Mammary epithelial cell (primary cell): ENCODE measurements at regions of chr3 and their contacts with region 1.

Region 1: DNA sequence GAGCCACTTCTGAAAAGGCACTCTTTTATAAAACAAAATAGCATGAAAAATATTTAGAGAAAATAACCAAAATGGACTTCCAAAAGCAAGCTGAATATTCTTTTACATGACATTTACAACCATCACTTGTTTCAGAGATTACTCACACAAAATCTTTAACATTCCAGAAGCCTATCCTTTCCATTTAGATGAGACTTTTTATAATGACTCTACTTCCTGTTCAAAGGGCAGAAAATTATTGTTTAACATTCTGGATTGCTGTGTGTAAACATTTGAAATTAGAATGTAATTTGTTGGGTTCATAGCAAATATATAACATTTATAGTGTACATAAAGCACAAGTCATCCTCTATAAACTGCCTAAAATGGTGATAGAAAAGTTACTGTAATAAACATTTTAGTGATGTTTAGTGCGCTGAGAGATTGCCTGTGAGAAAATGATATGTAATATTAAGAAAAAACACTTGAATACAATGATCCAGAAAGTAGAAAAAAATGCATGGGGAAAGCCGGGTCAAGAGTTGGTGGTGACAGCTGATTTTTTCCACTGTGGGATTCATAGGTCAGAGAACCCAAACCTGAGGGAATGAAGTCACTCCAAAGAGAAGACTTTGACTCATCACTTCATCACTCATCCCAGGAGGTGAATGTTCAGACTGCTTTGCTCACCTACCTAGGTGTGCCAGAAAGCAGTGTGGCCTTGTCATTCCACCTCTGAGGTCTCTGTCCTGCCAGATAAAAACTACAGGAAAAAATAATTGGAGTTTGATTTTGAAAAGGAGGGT is 305.8 kb downstream of the ARPP21 start:
- DNase-seq: peak; percentile 80
- H3K4me3 ChIP-seq: no peak overlapping the region
- H3K27ac ChIP-seq: no peak overlapping the region
- H3K4me1 ChIP-seq: peaks cover 11% of the 10 kb centered on the region
- H3K27me3 ChIP-seq: no peaks in the 10 kb centered on the region
- CTCF ChIP-seq: no peak

Region 2: GRCh38 chr3:35137612-35138011 is 807.5 kb before region 1 on chr3:
- CTCF ChIA-PET with region 1: no interaction called
- dilution Hi-C with region 1: no loop called
- in situ Hi-C with region 1: no loop called
- intact Hi-C with region 1: no loop called
- DNase-seq: no peak
- H3K4me3 ChIP-seq: no peak overlapping the region
- H3K27ac ChIP-seq: no peak overlapping the region
- H3K4me1 ChIP-seq: no peaks in the 10 kb centered on the region
- H3K27me3 ChIP-seq: no peaks in the 10 kb centered on the region
- CTCF ChIP-seq: no peak

Region 3: DNA sequence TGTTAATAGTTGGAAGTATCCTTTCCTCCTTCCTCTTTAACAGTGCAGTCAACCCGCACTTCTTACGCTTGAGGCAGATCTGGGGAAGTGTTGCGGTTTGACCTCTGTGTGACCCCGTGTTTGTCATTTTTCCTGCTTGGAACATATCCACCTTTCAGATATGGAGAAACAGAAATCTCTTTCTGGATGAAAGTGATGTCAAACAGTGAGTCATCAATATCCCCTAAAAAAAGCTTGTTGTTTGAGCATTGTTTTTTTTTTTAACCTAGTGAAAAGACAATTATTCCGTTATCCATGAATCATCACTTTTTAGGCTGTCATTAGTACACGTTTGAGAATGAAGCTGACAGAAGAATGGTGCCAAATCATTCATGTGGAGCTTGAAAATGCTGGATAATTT is 12.1 kb before region 1 on chr3:
- CTCF ChIA-PET with region 1: interaction called, 12 read pairs
- dilution Hi-C with region 1: no loop called
- in situ Hi-C with region 1: no loop called
- intact Hi-C with region 1: no loop called
- DNase-seq: peak; percentile 75
- H3K4me3 ChIP-seq: no peak overlapping the region
- H3K27ac ChIP-seq: no peak overlapping the region
- H3K4me1 ChIP-seq: peaks cover 4% of the 10 kb centered on the region
- H3K27me3 ChIP-seq: peaks cover 6% of the 10 kb centered on the region
- CTCF ChIP-seq: no peak

Region 4: DNA sequence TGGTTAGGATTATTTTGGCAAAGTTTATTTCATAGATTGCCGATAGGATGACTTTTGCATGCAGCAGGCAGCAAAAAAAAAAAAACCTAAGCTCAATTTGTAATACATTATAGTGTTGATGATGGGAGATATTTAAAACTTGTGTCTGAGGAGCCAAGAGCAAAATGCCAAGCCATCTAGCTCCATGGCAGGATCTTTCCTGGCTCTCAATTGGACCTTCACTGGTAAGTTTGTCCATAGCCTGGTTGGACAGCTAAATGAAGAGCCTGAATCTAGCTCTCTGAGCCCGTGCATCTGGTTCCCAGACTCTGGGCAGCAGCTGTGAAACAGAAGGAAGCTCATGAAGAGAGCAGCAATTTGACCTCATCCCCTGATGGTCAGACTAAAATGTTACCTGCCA is 452.7 kb after region 1 on chr3:
- CTCF ChIA-PET with region 1: no interaction called
- dilution Hi-C with region 1: no loop called
- in situ Hi-C with region 1: no loop called
- intact Hi-C with region 1: no loop called
- DNase-seq: no peak
- H3K4me3 ChIP-seq: no peak overlapping the region
- H3K27ac ChIP-seq: no peak overlapping the region
- H3K4me1 ChIP-seq: no peaks in the 10 kb centered on the region
- H3K27me3 ChIP-seq: no peaks in the 10 kb centered on the region
- CTCF ChIP-seq: no peak